BJ (cell line): ENCODE measurements at regions of chr5 and their contacts with region 1.

Region 1: GRCh38 chr5:173144200-173145176 is at the start of gene BNIP1:
- DNase-seq: peak; percentile 54
- H3K4me3 ChIP-seq: peak within 1 kb of the TSS; percentile 82
- H3K27me3 ChIP-seq: no peaks in the 10 kb centered on the region
- CTCF ChIP-seq: peak; percentile 99
- polyA plus RNA-seq, gene BNIP1: 16.8 and 17.7 TPM in 2 replicates

Region 2: GRCh38 chr5:173016621-173017047 is 127.9 kb before region 1 on chr5:
- CTCF ChIA-PET with region 1: interaction called, 4 read pairs
- POLR2A ChIA-PET with region 1: interaction called, 11 read pairs
- DNase-seq: peak; percentile 47
- H3K4me3 ChIP-seq: no peak overlapping the region
- H3K27me3 ChIP-seq: no peaks in the 10 kb centered on the region
- CTCF ChIP-seq: no peak